ENCODE measurements at regions of chr18 and their contacts with region 1.

Region 1: DNA sequence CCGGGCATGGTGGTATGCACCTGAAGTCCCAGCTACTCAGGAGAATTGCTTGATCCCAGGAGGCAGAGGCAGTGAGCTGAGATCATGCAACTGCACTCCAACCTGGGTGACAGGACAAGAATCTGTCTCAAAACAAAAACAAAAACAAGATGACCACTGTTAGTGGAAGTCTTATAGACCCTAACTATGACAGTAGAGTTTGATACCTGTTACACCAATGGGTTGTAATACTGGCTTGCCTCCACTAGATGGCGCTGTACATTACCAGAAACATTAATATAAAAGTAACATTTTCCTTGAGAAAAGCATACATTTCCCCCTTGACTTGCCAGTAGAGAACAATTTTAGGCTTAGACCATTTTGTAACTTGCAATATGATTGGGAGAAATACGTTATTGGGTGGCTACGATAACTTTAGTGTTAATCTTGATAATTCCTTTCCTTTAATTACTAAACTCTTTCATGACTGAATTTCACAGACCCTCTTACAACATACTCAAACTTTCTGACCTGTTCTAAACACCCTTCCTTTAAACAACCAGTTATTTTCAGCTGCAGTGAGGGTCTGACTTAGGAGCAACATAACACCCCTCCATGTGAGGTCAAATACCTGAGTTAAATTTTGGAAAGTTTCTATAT is 19.5 kb downstream of the SLC25A52 start:
- DNase-seq: no peak
- H3K4me3 ChIP-seq: no peak overlapping the region
- H3K27ac ChIP-seq: no peak overlapping the region
- H3K4me1 ChIP-seq: no peaks in the 10 kb centered on the region
- H3K27me3 ChIP-seq: no peaks in the 10 kb centered on the region
- CTCF ChIP-seq: peak; percentile 73 to 90 (median 86)
- EP300 ChIP-seq: no peak
- POLR2A ChIP-seq: no peak

Region 2: GRCh38 chr18:31538837-31539236 is 202.4 kb before region 1 on chr18:
- intact Hi-C with region 1: no loop called
- DNase-seq: no peak
- H3K4me3 ChIP-seq: no peak overlapping the region
- H3K27ac ChIP-seq: no peak overlapping the region
- H3K4me1 ChIP-seq: no peaks in the 10 kb centered on the region
- H3K27me3 ChIP-seq: no peaks in the 10 kb centered on the region
- CTCF ChIP-seq: no peak
- EP300 ChIP-seq: no peak
- POLR2A ChIP-seq: no peak

Region 3: DNA sequence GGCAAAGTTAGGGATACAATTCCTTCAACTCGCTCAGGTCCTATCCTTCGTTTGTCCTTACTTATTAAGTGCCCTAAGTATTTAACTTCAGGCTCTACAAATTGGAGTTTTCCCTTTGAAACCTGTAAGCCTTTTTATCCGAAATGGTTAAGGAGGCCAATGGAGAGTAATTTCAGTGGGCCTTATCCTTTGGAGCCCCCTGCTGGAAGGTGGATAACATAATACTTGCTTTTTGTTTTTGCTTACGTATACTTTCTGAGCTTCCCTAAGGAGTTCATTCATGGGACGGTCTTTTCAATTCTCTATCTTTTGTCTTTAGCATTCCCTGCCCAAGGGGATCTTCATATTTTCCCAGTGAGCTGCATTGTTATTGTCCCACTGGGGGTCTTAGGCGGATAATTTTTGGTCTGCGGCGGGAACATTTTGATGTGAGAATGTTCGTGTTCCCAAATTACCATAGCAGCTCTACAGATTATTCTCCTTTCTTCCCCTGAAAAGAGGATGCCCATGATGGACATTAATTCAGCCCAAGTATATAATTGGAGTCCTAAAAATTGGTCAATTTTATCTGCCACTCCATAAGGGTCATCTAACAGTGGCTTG is 236.2 kb after region 1 on chr18:
- intact Hi-C with region 1: loop called (anchors 5 kb)
- DNase-seq: no peak
- H3K4me3 ChIP-seq: no peak overlapping the region
- H3K27ac ChIP-seq: no peak overlapping the region
- H3K4me1 ChIP-seq: peaks cover 0 to under 1% (median 0%) of the 10 kb centered on the region in 4 donors
- H3K27me3 ChIP-seq: no peaks in the 10 kb centered on the region
- CTCF ChIP-seq: peak; percentile 53 to 66 (median 56)
- EP300 ChIP-seq: no peak
- POLR2A ChIP-seq: no peak

Measured in esophagus muscularis mucosa (tissue), 4 donors.